H1 (cell line): ENCODE measurements at regions of chr15 and their contacts with region 1.

Region 1: GRCh38 chr15:31435261-31435911 is 108.8 kb downstream of the KLF13 start:
- DNase-seq: peak; percentile 73 to 76
- H3K4me3 ChIP-seq: no peak overlapping the region
- H3K27ac ChIP-seq: no peak overlapping the region
- H3K4me1 ChIP-seq: no peaks in the 10 kb centered on the region; a peak in 1 of 7 replicates
- H3K27me3 ChIP-seq: peaks cover 0 to 3% (median 2%) of the 10 kb centered on the region in 4 experiments; a peak in 5 of 7 replicates
- CTCF ChIP-seq: peak; percentile 87 to 99 (median 89)
- EP300 ChIP-seq: no peak
- POLR2A ChIP-seq: no peak
- RAD21 ChIP-seq: peak; percentile 82 to 86

Region 2: GRCh38 chr15:31200735-31201151 is 234.6 kb before region 1 on chr15:
- CTCF ChIA-PET with region 1: interaction called, 12 read pairs
- POLR2A ChIA-PET with region 1: no interaction called
- DNase-seq: peak in 1 of 2 experiments; percentile 76
- H3K4me3 ChIP-seq: no peak overlapping the region
- H3K27ac ChIP-seq: no peak overlapping the region
- H3K4me1 ChIP-seq: peaks cover 0 to 2% (median 0%) of the 10 kb centered on the region in 4 experiments; a peak in 1 of 7 replicates
- H3K27me3 ChIP-seq: no peaks in the 10 kb centered on the region
- CTCF ChIP-seq: peak; percentile 66 to 72 (median 68)
- EP300 ChIP-seq: no peak
- POLR2A ChIP-seq: no peak
- RAD21 ChIP-seq: peak; percentile 80 to 84

Region 3: GRCh38 chr15:31215490-31216214 is 219.7 kb before region 1 on chr15:
- CTCF ChIA-PET with region 1: interaction called, 10 read pairs
- POLR2A ChIA-PET with region 1: no interaction called
- DNase-seq: peak in 1 of 2 experiments; percentile 91
- H3K4me3 ChIP-seq: peak overlapping the region; percentile 43 to 69 (median 44)
- H3K27ac ChIP-seq: no peak overlapping the region
- H3K4me1 ChIP-seq: peaks cover 0 to 11% (median 4%) of the 10 kb centered on the region in 4 experiments; a peak in 5 of 7 replicates
- H3K27me3 ChIP-seq: no peaks in the 10 kb centered on the region; a peak in 2 of 7 replicates
- CTCF ChIP-seq: peak; percentile 76 to 86 (median 86)
- EP300 ChIP-seq: no peak
- POLR2A ChIP-seq: no peak; a peak in 1 of 3 replicates
- RAD21 ChIP-seq: peak; percentile 72 to 81

Region 4: GRCh38 chr15:31357148-31357752 is 78.1 kb before region 1 on chr15:
- CTCF ChIA-PET with region 1: interaction called, 27 read pairs
- POLR2A ChIA-PET with region 1: no interaction called
- DNase-seq: no peak
- H3K4me3 ChIP-seq: no peak overlapping the region
- H3K27ac ChIP-seq: no peak overlapping the region
- H3K4me1 ChIP-seq: peaks cover 9 to 35% (median 21%) of the 10 kb centered on the region in 4 experiments
- H3K27me3 ChIP-seq: no peaks in the 10 kb centered on the region
- CTCF ChIP-seq: no peak
- EP300 ChIP-seq: no peak
- POLR2A ChIP-seq: no peak
- RAD21 ChIP-seq: no peak

Region 5: DNA sequence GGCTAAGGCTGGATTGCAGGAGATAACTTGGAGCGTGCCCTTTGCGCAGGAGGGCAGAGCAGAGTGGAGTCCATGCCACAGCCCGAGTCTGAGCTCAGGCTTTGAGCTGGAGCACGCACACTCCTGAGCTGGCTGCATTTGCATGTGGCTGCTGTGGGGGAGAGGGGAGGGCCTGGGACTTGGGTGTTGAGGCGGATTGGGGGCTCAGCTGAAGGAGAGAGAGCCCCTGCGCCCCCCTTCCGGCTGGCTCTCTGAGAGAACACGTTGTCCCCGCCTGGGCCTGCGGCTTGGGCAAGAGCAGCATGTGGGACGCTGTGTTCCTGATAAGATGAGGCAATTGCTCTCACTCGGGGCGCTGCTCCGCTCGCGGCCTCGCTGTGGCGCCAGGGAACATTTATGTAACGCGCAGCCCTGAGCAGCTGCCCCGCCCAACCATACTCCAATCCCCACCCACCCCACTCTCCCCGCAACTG is 69.7 kb before region 1 on chr15:
- CTCF ChIA-PET with region 1: interaction called, 31 read pairs
- POLR2A ChIA-PET with region 1: no interaction called
- DNase-seq: peak; percentile 44 to 78
- H3K4me3 ChIP-seq: peak overlapping the region in 1 of 4 experiments; percentile 32; a peak in 1 of 8 replicates
- H3K27ac ChIP-seq: no peak overlapping the region
- H3K4me1 ChIP-seq: peaks cover 8 to 53% (median 45%) of the 10 kb centered on the region in 4 experiments
- H3K27me3 ChIP-seq: no peaks in the 10 kb centered on the region
- CTCF ChIP-seq: peak; percentile 37 to 48 (median 44)
- EP300 ChIP-seq: no peak
- POLR2A ChIP-seq: no peak
- RAD21 ChIP-seq: peak; percentile 13 to 50; a peak in 3 of 4 replicates

Region 6: GRCh38 chr15:31396881-31397560 is 38.4 kb before region 1 on chr15:
- CTCF ChIA-PET with region 1: interaction called, 12 read pairs
- POLR2A ChIA-PET with region 1: interaction called, 7 read pairs
- DNase-seq: peak; percentile 87 to 93
- H3K4me3 ChIP-seq: no peak overlapping the region; a peak in 1 of 8 replicates
- H3K27ac ChIP-seq: no peak overlapping the region
- H3K4me1 ChIP-seq: peaks cover 0 to 23% (median 13%) of the 10 kb centered on the region in 4 experiments; a peak in 6 of 7 replicates
- H3K27me3 ChIP-seq: peaks cover 7 to 19% (median 17%) of the 10 kb centered on the region in 4 experiments; a peak in 6 of 7 replicates
- CTCF ChIP-seq: peak; percentile 14 to 35 (median 28); a peak in 3 of 4 replicates
- EP300 ChIP-seq: no peak
- POLR2A ChIP-seq: no peak
- RAD21 ChIP-seq: peak; percentile 42 to 50; a peak in 3 of 4 replicates

Region 7: DNA sequence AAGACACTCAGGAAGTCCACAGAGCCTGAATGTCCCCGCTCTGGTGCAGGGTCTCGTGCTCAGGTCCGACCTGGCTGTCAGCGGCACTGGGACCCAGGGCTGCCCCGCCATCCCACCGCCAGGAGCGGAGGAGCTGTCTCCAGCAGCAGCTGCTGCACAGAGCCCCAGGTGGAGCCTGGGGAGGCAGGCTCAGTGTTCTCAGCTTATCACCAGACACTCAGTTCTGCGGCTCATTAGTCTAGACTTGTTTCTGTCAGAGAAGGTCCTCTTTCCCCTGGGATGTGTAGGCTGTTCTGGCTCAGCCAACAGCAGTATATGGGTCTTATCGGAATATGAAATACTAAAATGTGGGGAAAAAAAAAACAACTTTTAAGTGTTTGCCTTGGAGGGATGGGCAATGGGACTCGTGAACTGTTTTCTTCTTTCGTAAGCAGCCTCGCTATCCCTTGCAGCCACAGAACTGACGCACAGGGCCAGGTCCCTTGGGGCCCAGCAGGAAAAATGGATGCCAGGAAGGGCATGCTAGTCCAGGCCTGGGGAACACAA is 32.8 kb before region 1 on chr15:
- CTCF ChIA-PET with region 1: interaction called, 12 read pairs
- POLR2A ChIA-PET with region 1: no interaction called
- DNase-seq: no peak
- H3K4me3 ChIP-seq: no peak overlapping the region
- H3K27ac ChIP-seq: no peak overlapping the region
- H3K4me1 ChIP-seq: peaks cover 0 to 14% (median 4%) of the 10 kb centered on the region in 4 experiments; a peak in 4 of 7 replicates
- H3K27me3 ChIP-seq: no peaks in the 10 kb centered on the region; a peak in 2 of 7 replicates
- CTCF ChIP-seq: no peak
- EP300 ChIP-seq: no peak
- POLR2A ChIP-seq: no peak
- RAD21 ChIP-seq: no peak